Activated CD4-positive, alpha-beta memory T cell treated with anti-CD3 and anti-CD28 coated beads, Interleukin-2, amount 10 ng/mL, durations not matched to agents 7 days and 5 days (primary cell): ENCODE measurements at regions of chr1 and their contacts with region 1.

Region 1: GRCh38 chr1:203625628-203626019 is 1.0 kb upstream of the ATP2B4 start:
- DNase-seq: peak; percentile 75
- H3K4me3 Mint-ChIP-seq: peak overlapping the region; percentile 98
- H3K27ac Mint-ChIP-seq: peak overlapping the region; percentile 89
- H3K4me1 Mint-ChIP-seq: peaks cover 67% of the 10 kb centered on the region
- H3K27me3 Mint-ChIP-seq: no peaks in the 10 kb centered on the region

Region 2: DNA sequence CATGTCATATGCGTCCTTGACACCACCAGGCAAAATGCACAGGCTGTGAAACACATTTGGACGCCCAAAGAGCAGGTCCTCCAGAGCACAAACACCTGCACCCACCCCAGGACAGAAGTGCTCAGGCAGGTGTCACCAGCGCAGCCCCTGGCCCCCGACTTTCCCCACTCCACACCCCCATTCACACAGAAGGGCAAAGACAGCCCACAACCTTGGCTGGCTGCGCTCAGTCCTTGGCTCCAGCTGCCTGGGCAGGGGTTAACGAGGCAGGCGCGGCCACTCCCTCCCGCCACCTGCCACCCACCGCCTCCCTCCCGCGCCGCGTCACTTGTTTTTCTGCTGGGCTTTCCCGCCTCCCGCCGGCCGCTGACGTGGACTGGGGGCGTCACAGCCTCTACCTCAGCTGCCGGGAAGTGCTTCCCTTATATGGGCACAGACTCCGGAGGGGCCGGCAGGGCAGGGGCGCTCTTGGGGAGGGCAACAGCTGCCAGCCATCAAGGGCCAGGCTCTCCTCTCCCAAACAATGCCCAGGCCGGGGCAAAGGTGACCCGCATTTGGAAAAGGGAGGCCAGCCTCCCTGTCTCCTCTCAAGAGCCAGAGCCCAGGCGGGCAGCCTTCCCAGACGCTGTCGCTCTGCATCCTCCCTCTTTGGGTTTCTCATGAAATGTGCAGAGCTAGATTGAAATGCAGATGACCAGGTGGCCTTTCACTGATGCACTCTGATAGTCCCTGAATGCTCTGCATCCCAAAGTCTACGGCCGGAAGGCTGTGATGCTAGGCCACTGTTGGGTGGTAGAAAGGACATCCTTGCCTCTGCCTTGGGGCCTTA is 335.1 kb before region 1 on chr1:
- CTCF ChIA-PET with region 1: no interaction called
- POLR2A ChIA-PET with region 1: interaction called, 14 read pairs
- DNase-seq: peak; percentile 98
- H3K4me3 Mint-ChIP-seq: peak overlapping the region; percentile 76
- H3K27ac Mint-ChIP-seq: peak overlapping the region; percentile 100
- H3K4me1 Mint-ChIP-seq: peaks cover 73% of the 10 kb centered on the region
- H3K27me3 Mint-ChIP-seq: no peaks in the 10 kb centered on the region

Region 3: DNA sequence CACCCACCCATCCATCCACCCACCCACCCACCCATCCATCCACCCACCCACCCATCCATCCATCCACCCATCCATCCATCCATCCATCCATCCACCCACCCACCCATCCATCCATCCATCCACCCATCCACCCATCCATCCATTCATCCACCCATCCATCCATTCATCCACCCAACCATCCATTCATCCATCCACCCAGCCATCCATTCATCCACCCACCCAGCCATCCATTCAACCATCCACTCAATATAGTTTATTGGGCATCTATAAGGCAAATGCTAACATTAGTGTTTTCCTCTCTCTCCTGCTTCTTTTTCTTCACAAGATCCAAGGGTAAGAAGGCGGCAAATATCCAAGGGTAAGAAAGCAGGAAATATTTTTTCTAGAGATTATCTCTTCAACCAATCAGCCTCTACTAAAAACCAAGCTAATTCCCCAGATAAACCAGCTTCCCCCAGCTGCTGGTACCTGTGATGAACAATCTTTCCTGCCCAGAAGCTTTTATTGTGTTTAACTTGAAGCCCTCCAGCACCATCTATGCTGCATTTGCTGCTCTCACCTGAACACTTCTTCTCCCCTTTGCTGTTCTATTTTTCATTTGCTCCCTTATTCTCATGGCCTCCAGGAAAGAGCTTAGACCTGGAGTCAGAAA is 21.6 kb before region 1 on chr1:
- CTCF ChIA-PET with region 1: interaction called, 31 read pairs
- POLR2A ChIA-PET with region 1: interaction called, 101 read pairs
- DNase-seq: no peak
- H3K4me3 Mint-ChIP-seq: no peak overlapping the region
- H3K27ac Mint-ChIP-seq: no peak overlapping the region
- H3K4me1 Mint-ChIP-seq: peaks cover 51% of the 10 kb centered on the region
- H3K27me3 Mint-ChIP-seq: no peaks in the 10 kb centered on the region

Region 4: DNA sequence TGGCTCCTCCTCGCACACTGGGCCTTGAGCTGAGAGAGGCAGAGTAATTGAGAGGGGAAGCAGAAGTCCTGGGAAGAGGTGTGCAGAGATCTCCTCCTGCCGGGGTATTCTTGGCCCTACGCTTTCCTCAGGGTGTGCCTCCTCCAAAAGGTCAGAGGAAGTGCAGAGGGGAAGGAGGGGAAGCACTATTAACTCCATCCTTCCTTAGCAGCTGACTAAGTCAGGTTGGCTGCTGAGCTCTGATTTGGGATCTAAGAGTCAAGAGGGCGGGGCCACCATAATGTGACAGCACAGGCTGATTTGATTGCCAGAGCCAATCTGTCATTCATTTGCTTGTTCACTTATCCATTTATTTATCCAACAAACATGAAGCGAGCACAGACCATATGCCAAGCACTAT is 13.3 kb after region 1 on chr1:
- CTCF ChIA-PET with region 1: interaction called, 3 read pairs
- POLR2A ChIA-PET with region 1: interaction called, 31 read pairs
- DNase-seq: no peak
- H3K4me3 Mint-ChIP-seq: no peak overlapping the region
- H3K27ac Mint-ChIP-seq: peak overlapping the region; percentile 49
- H3K4me1 Mint-ChIP-seq: peaks cover 69% of the 10 kb centered on the region
- H3K27me3 Mint-ChIP-seq: no peaks in the 10 kb centered on the region

Region 5: GRCh38 chr1:203673550-203674427 is 48.2 kb after region 1 on chr1:
- CTCF ChIA-PET with region 1: interaction called, 9 read pairs
- POLR2A ChIA-PET with region 1: interaction called, 34 read pairs
- DNase-seq: peak; percentile 80
- H3K4me3 Mint-ChIP-seq: peak overlapping the region; percentile 69
- H3K27ac Mint-ChIP-seq: peak overlapping the region; percentile 97
- H3K4me1 Mint-ChIP-seq: peaks cover 75% of the 10 kb centered on the region
- H3K27me3 Mint-ChIP-seq: no peaks in the 10 kb centered on the region

Region 6: DNA sequence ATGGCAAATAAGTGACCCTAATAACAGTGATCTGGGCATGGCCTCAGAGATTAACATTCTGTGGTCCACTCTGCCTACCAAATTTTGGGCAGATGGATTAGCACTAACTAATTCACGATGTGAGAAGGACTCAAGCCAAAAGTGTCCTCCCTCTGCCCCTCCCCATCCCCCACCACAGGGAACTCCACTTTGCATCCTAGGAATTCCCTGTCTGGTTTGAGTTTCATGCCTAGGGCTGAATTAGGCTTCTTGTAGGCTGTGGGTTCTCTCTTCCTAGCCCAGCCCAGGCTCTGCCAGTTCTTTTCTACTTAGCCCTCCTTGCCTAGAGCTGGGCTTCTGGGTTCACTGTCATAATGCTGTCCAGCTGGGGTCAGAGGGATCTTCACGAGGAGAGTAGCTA is 65.1 kb after region 1 on chr1:
- CTCF ChIA-PET with region 1: interaction called, 8 read pairs
- POLR2A ChIA-PET with region 1: interaction called, 14 read pairs
- DNase-seq: no peak
- H3K4me3 Mint-ChIP-seq: no peak overlapping the region
- H3K27ac Mint-ChIP-seq: no peak overlapping the region
- H3K4me1 Mint-ChIP-seq: peaks cover 48% of the 10 kb centered on the region
- H3K27me3 Mint-ChIP-seq: no peaks in the 10 kb centered on the region

Region 7: DNA sequence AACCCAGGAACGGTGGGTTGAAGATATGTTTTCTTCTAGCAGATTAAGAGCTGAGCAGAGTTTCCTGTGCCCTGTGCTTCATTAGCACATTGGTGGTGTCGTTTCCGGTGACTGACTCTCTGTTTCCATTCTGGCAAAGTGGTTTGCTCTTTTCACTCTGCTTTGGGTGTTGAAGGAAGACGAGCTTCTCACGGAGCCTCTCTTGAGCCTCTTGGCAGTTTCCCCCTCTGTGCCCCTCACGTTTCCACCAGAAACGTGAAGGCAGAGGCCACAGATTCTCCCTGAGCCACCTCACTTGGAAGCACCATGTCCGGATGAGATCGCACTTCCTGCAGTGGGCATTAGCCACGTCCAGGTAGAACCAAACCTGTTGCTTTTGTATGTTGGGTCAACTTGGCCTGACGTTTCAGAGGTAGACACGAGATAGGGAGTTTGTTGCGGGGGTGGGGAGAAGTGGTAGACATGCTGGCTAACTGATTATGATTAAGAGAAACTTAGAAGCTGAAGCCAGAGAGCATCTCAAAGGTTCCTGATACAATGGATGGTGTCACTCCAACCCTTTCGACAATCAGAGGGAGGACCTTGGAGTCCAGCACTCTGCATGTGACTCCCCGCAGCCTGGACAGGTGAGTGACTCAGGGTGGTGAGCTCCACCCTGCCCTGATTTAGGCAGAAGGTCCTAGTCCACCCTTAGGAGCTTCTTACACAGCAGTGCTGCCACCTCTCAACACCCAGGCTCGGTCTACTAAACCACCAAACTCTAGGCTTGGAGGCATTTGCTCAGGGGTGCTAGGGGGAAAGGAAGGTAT is 139.6 kb after region 1 on chr1 and contains the start of gene LAX1:
- CTCF ChIA-PET with region 1: interaction called, 6 read pairs
- POLR2A ChIA-PET with region 1: interaction called, 33 read pairs
- DNase-seq: peak; percentile 87
- H3K4me3 Mint-ChIP-seq: peak within 1 kb of the TSS; percentile 95
- H3K27ac Mint-ChIP-seq: peak within 1 kb of the TSS; percentile 100
- H3K4me1 Mint-ChIP-seq: peaks cover 54% of the 10 kb centered on the region
- H3K27me3 Mint-ChIP-seq: no peaks in the 10 kb centered on the region
- total RNA-seq, gene LAX1: 22.7 to 23.2 TPM